Activated CD4-positive, alpha-beta T cell treated with anti-CD3 and anti-CD28 coated beads for 36 hours (primary cell): ENCODE measurements at regions of chr16 and their contacts with region 1.

Region 1: DNA sequence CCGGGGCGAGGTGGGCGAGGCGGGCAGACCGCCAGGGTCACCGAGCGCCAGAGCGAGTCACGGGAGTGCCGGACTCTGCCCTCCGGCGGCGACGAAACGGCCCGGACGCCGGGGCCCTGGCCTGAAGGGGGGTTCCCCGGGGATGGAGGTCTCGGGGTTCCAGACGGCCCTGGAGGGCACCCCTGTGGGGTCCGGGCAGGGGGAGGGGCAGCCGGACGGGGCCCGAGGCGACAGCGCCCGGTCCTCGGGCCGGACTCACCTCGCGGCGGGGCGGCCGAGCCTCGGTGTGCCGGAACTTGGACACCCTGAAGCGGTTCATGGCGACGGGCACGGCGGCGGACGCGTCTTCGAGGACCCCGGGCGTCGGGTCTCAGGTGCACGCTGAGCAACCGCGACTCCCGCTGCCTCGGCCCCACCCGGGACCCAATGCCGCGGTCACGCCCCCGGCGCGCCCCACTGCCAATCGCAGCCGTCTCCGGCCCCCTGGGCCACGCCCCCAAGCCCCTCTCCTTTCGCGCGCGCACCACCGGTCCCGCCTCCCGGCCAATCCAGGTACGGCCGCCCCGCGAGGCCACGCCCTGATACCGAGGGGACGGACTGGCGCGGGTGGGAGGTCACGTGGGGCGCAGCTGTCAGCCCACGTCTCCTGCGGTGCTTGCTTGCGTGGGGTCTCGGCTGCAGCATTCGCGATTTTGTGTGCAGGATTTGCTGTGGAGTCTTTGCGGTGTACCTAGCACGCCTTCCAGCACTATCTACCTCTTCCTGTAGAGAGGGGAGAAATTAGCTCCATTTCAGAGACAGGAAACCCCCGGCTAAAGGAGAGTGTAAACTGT is at the start of gene CORO7:
- DNase-seq: peak; percentile 98
- ATAC-seq: peak; percentile 81
- H3K4me3 Mint-ChIP-seq: peak within 1 kb of the TSS; percentile 86
- H3K27ac Mint-ChIP-seq: peak within 1 kb of the TSS; percentile 84
- H3K4me1 Mint-ChIP-seq: peaks cover 29% of the 10 kb centered on the region
- H3K27me3 Mint-ChIP-seq: no peaks in the 10 kb centered on the region
- total RNA-seq, gene CORO7: 65.0 to 67.1 TPM

Region 2: GRCh38 chr16:3717235-3718018 is 699.0 kb before region 1 on chr16 and contains the start of gene TRAP1:
- CTCF ChIA-PET with region 1: no interaction called
- POLR2A ChIA-PET with region 1: no interaction called
- intact Hi-C with region 1: loop called in 1 of 2 experiments (anchors 2 kb)
- DNase-seq: peak; percentile 95
- ATAC-seq: peak; percentile 95
- H3K4me3 Mint-ChIP-seq: peak within 1 kb of the TSS; percentile 89
- H3K27ac Mint-ChIP-seq: peak within 1 kb of the TSS; percentile 92
- H3K4me1 Mint-ChIP-seq: peaks cover 44% of the 10 kb centered on the region
- H3K27me3 Mint-ChIP-seq: no peaks in the 10 kb centered on the region
- total RNA-seq, gene TRAP1: 306 to 360 TPM

Region 3: GRCh38 chr16:4081521-4082021 is 334.8 kb before region 1 on chr16:
- CTCF ChIA-PET with region 1: no interaction called
- POLR2A ChIA-PET with region 1: no interaction called
- intact Hi-C with region 1: no loop called
- DNase-seq: peak; percentile 70
- ATAC-seq: peak; percentile 69
- H3K4me3 Mint-ChIP-seq: peak overlapping the region; percentile 14
- H3K27ac Mint-ChIP-seq: no peak overlapping the region
- H3K4me1 Mint-ChIP-seq: peaks cover 50% of the 10 kb centered on the region
- H3K27me3 Mint-ChIP-seq: no peaks in the 10 kb centered on the region

Region 4: DNA sequence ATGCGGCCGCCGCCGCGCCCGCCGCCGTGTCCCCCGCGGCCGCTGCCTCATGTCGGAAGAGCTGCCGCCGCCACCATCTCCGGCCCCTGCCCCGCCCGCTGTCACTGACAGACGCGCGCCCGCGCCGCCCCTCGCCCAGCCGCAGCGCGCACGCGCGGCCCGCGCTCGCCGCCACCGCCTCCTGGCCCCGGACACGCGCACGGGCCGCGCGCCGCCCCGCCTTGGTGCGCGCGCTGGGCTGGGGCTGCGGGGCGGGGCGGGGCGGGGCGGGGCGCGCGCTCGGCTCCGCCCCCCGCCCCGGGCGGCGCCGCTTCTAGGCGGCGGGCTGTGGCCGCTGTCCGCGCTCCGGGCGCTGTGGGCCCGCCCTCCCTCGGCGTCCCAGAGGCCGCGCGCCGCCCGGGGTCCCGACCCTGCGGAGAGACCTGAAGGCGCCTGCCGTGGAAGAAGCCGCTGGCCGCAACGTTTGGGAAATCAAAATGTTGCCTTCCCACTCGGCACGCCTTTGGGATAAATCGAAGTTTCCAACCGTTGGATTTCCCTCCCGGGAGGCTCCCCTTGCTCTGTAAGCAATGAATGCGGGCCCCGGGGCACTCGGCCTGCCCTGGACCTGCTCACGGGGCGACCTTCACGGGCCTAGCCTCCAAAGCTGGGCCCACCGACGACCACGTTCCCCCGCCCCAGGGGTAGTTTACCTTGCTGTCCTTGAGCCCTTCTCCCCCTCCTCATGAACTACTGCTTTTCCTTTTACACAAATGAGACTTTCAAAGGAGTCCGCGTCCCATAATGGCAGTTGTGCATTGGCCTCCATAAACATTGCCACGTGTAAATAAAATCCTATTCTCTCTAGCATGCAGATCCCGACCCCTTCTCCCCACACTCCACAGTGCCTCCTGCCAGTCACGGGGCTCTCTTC is 299.8 kb before region 1 on chr16 and contains the start of gene ADCY9:
- CTCF ChIA-PET with region 1: no interaction called
- POLR2A ChIA-PET with region 1: no interaction called
- intact Hi-C with region 1: loop called in 1 of 2 experiments (anchors 2 kb)
- DNase-seq: peak; percentile 86
- ATAC-seq: peak; percentile 75
- H3K4me3 Mint-ChIP-seq: peak within 1 kb of the TSS; percentile 78
- H3K27ac Mint-ChIP-seq: peak within 1 kb of the TSS; percentile 78
- H3K4me1 Mint-ChIP-seq: peaks cover 36% of the 10 kb centered on the region
- H3K27me3 Mint-ChIP-seq: peaks cover 7% of the 10 kb centered on the region
- total RNA-seq, gene ADCY9: 5.3 to 6.2 TPM

Region 5: DNA sequence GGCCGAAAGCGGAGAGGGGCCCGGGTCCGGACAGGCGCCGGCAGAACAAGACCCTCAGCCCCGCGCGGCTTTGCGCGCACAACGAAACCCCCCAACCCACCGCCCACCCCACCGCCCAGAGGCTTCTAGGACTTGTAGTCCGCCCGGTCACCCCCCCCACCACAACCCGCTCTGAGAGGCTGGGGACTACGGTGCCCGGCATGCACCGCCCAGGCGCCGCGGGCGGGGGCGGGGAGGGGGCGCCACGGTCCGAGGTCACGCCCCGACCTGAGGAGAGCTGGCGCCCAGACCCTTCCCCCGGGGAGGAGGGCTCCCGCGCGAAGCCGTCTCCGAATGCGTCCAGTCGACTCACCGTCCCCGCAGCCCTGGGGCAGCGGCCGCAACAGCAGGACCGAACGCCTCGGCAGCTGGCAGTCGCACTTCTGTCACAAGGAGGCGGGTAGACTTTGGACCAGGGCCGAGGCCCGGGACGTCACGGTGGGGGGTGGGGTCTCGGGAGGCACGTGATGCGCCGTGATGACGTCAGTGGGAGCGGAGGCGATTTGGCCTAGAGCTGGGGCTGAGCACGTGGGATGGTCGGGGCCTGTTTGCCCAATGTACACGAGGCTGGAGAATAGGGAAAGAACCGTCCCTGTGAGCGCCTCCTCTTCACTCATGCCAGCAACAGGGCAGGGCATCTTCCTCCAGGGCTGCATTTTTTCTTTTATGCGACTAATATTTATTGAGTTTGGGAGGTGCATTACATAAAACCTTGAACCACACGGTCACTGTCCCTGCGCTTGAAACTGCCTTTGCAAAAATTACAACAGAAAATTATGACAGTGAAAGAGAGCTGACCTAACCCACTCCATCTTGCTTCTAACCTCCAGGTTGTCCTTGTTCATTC is 122.2 kb after region 1 on chr16 and contains the start of gene CDIP1:
- CTCF ChIA-PET with region 1: no interaction called
- POLR2A ChIA-PET with region 1: no interaction called
- intact Hi-C with region 1: loop called in 1 of 2 experiments (anchors 2 kb)
- DNase-seq: peak; percentile 99
- ATAC-seq: peak; percentile 81
- H3K4me3 Mint-ChIP-seq: peak within 1 kb of the TSS; percentile 75
- H3K27ac Mint-ChIP-seq: peak within 1 kb of the TSS; percentile 63
- H3K4me1 Mint-ChIP-seq: peaks cover 41% of the 10 kb centered on the region
- H3K27me3 Mint-ChIP-seq: no peaks in the 10 kb centered on the region
- total RNA-seq, gene CDIP1: 28.3 to 30.2 TPM

Region 6: DNA sequence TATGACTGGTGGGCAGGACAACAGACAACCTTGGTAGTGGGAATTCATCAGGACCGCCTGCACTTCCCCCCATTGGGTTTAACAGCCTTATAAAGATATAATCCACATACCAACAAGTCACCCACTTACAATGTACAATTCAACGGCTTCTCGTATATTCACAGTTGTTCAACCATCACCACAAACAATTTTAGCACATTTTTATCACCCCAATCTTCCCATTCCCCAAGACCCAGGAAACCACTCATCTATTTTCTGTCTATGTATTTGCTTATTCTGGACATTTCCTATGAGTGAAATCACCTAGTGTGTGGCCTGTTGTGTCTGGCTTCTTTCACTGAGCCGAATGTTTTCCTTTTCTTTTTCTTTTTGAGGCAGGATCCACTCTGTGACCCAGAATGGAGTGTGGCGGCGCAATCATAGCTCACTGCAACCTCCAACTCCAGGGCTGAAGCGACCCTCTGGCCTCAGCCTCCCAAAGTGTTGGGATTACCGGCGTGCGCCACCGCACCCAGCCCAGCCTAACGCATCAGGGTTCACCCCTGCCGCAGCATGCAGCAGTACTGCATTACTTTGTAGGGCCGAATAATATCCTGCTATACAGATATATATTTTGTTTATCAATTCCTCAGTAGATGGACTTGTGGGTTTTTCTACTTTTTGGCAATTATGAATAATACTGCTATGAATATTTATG is 306.8 kb after region 1 on chr16:
- CTCF ChIA-PET with region 1: no interaction called
- POLR2A ChIA-PET with region 1: no interaction called
- intact Hi-C with region 1: no loop called
- DNase-seq: no peak
- ATAC-seq: no peak
- H3K4me3 Mint-ChIP-seq: no peak overlapping the region
- H3K27ac Mint-ChIP-seq: no peak overlapping the region
- H3K4me1 Mint-ChIP-seq: no peaks in the 10 kb centered on the region
- H3K27me3 Mint-ChIP-seq: no peaks in the 10 kb centered on the region

Region 7: DNA sequence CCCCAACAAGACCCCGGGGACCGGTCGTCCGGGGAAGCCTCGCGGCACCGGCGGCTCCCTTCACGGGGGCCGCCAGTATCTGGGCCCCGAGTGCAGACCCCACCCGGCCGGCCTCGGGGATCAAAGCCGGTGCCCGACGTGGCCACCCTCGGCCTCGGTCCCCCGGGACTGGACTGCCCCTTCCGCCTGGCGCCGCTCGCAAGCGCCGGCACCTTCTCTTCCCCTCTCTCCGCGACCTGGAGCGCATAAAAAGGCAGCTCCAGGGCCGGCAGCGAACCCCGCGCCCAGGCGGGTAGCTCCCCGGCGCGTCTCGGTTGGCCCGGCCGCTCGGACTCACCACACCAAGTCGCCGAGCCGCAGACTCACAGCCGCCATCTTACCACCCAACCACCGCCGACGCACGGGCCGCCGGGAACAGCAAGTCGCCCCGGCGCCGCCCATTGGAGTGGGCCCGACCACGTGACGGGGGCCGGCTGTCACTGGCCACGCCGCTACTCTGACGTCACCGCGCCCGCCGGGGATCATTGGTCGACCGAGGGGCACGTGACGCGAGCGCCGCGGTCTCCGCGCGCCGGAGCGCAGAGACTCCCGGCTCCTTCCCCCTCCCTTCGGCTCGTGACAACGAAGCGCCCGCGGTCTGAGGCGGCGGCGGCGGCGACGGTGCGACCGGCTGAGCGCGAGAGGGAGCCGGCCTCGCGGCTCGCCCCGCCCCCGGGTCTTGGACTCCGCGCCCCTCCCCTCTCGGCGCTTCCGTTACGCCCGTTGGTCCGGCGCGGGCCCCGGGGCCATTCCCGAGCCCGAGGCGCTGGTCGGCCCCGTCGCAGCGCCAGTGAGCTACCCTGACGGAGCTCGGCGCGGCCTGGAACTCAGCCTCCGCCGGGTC is 430.7 kb after region 1 on chr16 and contains the starts of genes GLYR1 and UBN1:
- CTCF ChIA-PET with region 1: no interaction called
- POLR2A ChIA-PET with region 1: no interaction called
- intact Hi-C with region 1: loop called in 1 of 2 experiments (anchors 2 kb)
- DNase-seq: peak; percentile 100
- ATAC-seq: peak; percentile 96
- H3K4me3 Mint-ChIP-seq: peak within 1 kb of the TSS; percentile 77
- H3K27ac Mint-ChIP-seq: peak within 1 kb of the TSS; percentile 84
- H3K4me1 Mint-ChIP-seq: peaks cover 54% of the 10 kb centered on the region
- H3K27me3 Mint-ChIP-seq: no peaks in the 10 kb centered on the region
- total RNA-seq, gene GLYR1: 76.9 to 78.4 TPM
- total RNA-seq, gene UBN1: 19.3 to 23.0 TPM